OCI-LY7 (cell line): ENCODE measurements at regions of chr14 and their contacts with region 1.

Region 1: GRCh38 chr14:91373591-91374254 is 43.9 kb downstream of the CCDC88C start:
- DNase-seq: peak; percentile 74
- H3K4me3 ChIP-seq: peak overlapping the region; percentile 60
- H3K27ac ChIP-seq: peak overlapping the region; percentile 94
- H3K4me1 ChIP-seq: peaks cover 100% of the 10 kb centered on the region
- CTCF ChIP-seq: no peak

Region 2: DNA sequence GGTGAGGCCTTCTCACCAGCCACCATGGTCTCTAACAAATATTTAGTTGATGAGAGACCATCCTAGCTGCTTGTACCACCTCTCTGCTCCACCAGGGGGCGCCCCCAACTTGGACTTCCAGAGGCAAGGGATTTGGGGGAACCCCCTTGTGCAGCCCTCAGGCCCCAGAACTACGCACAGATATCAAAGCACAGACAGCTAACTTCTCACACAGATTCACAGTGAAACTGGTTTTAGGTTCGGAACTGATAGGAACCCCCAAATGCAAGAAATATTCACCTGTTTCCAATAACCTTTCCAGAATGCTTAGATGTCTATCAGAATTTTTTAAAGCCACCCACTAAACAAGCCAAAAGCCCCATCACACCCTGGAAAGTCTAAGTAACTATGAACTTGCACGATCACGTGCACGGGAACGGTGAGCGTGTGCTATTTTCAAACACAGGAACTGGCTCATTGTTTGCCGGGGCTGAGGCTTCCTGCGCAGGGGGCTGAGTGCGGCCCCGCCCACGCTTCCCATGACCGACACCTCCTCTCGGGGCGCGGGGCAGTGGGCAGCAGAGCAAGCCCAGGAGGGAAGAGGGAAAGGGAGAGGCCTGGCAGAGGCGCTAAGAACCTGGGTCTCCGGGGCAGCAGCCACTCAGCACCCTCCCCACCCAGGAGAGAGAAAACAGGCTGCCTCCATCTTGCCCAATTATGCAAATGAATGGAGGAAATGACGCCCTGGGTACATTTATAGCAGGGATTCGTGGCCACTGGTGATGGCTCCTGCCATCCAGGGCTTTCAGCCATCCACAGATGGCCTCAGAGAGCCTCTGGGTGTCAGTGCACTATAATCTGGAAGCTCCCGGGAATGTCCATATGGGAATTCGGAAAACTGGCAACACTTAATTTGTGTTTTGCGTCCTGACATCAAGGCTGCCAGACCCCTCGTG is 49.8 kb before region 1 on chr14:
- CTCF ChIA-PET with region 1: interaction called, 3 read pairs
- POLR2A ChIA-PET with region 1: interaction called, 3 read pairs
- intact Hi-C with region 1: loop called (anchors 1 kb)
- DNase-seq: peak; percentile 88
- H3K4me3 ChIP-seq: peak overlapping the region; percentile 53
- H3K27ac ChIP-seq: peak overlapping the region; percentile 92
- H3K4me1 ChIP-seq: peaks cover 58% of the 10 kb centered on the region
- CTCF ChIP-seq: peak; percentile 100

Region 3: GRCh38 chr14:91388551-91388975 is 14.8 kb after region 1 on chr14:
- CTCF ChIA-PET with region 1: no interaction called
- POLR2A ChIA-PET with region 1: interaction called, 33 read pairs
- intact Hi-C with region 1: loop called (anchors 2 kb)
- DNase-seq: no peak
- H3K4me3 ChIP-seq: no peak overlapping the region
- H3K27ac ChIP-seq: peak overlapping the region; percentile 49
- H3K4me1 ChIP-seq: peaks cover 96% of the 10 kb centered on the region
- CTCF ChIP-seq: no peak

Region 4: GRCh38 chr14:91396959-91397815 is 23.5 kb after region 1 on chr14:
- CTCF ChIA-PET with region 1: interaction called, 6 read pairs
- POLR2A ChIA-PET with region 1: interaction called, 40 read pairs
- intact Hi-C with region 1: no loop called
- DNase-seq: peak; percentile 87
- H3K4me3 ChIP-seq: peak overlapping the region; percentile 63
- H3K27ac ChIP-seq: peak overlapping the region; percentile 89
- H3K4me1 ChIP-seq: peaks cover 94% of the 10 kb centered on the region
- CTCF ChIP-seq: no peak